ENCODE measurements at regions of chr9 and their contacts with region 1.

Region 1: DNA sequence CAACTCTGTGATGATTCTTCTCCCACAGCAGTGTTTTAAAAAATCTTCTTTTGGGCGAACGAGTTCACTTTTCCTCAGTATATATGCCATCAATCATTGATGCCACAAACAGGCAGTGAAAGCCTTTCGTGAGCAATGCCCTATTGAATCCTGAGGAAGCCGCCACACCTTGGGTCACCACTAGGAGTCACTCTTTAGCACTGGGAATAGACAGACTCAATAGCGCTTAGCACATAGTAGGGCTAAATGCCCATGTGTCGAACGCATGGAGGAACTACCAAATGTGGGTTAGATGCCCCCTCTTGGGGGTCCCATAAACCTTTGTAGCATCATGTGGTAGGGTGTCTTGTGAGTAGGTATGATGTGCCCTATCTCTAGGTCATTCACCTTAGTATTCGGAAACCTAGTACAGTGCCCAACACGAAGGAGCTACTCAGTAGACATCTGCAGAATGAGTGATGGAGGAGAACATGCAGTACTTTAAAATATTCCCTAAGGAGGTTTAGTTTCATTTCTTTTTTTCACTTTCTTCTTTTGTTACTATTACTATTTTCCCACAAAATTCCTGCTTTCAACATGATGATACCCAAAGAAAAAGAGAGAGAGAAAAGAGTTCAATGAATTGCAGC is 603.7 kb downstream of the BNC2 start:
- DNase-seq: no peak
- H3K4me3 ChIP-seq: peak overlapping the region in 2 of 4 donors; percentile 19 to 38
- H3K27ac ChIP-seq: peak overlapping the region in 3 of 4 donors; percentile 50 to 55 (median 54)
- H3K4me1 ChIP-seq: peaks cover 0 to 15% (median 2%) of the 10 kb centered on the region in 4 donors
- H3K27me3 ChIP-seq: no peaks in the 10 kb centered on the region
- CTCF ChIP-seq: peak in 4 of 5 experiments; percentile 24 to 38 (median 30)
- EP300 ChIP-seq: no peak
- POLR2A ChIP-seq: no peak

Region 2: DNA sequence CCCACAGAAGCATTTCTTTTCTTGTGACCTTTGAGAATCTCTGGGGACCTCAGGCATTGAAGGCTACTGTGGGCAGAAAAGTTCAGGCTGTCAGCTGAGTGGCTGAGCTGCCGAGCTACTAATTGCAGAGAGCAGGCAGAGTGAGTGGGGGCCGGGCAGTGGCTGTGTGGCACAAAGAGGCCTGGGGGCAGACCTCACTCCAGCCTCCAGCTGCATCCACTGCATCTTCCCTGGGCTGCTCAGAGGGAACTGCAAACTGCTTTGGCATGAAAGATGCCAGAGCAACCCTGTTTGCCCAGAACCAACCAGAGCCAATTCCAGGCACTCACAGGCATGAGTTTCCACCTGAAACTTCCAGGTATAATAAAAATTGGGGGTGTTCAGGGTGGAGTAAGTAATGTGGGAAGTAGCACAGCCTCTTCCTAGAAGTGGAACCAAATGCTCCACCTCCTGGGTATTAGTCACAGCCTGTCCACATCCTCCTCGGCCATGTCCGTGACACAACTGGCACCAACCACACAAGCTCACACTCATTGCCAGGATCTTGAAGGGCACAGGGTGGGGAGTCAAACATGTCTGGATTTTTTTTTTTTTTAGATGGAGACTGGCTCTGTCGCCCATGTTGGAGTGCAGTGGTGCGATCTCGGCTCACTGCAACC is 54.8 kb after region 1 on chr9:
- in situ Hi-C with region 1: loop called in 1 of 4 experiments (anchors 10 kb)
- intact Hi-C with region 1: no loop called
- DNase-seq: no peak
- H3K4me3 ChIP-seq: no peak overlapping the region
- H3K27ac ChIP-seq: no peak overlapping the region
- H3K4me1 ChIP-seq: no peaks in the 10 kb centered on the region
- H3K27me3 ChIP-seq: no peaks in the 10 kb centered on the region
- CTCF ChIP-seq: no peak
- EP300 ChIP-seq: no peak
- POLR2A ChIP-seq: no peak

Region 3: DNA sequence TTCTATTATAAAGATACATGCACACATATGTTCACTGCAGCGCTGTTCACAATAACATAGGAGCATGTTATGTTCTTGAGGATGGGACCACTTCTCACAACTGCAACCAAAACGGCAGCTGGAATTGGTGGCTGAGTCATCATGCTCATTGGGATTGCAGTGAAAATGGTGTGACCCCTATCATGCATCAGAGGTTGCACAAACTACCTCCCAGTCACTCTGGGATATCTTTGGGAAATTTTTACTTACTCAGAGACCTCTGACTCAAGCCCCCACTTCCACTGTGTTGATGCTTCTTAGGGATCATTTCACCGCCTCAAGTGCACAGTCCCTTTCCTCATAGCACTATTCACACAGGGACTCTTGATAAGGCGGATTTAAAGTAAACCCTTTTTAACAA is 129.6 kb after region 1 on chr9:
- in situ Hi-C with region 1: no loop called
- intact Hi-C with region 1: no loop called
- DNase-seq: no peak
- H3K4me3 ChIP-seq: no peak overlapping the region
- H3K27ac ChIP-seq: no peak overlapping the region
- H3K4me1 ChIP-seq: no peaks in the 10 kb centered on the region
- H3K27me3 ChIP-seq: no peaks in the 10 kb centered on the region
- CTCF ChIP-seq: no peak
- EP300 ChIP-seq: no peak
- POLR2A ChIP-seq: no peak

Region 4: GRCh38 chr9:16848179-16848578 is 581.4 kb after region 1 on chr9:
- in situ Hi-C with region 1: no loop called
- intact Hi-C with region 1: loop called (anchors 2 kb)
- DNase-seq: no peak
- H3K4me3 ChIP-seq: no peak overlapping the region
- H3K27ac ChIP-seq: no peak overlapping the region
- H3K4me1 ChIP-seq: no peaks in the 10 kb centered on the region
- H3K27me3 ChIP-seq: no peaks in the 10 kb centered on the region
- CTCF ChIP-seq: no peak
- EP300 ChIP-seq: no peak
- POLR2A ChIP-seq: no peak

Measured in transverse colon (tissue), 4 donors.